Sigmoid colon (tissue), 7 donors: ENCODE measurements at regions of chr21 and their contacts with region 1.

Region 1: DNA sequence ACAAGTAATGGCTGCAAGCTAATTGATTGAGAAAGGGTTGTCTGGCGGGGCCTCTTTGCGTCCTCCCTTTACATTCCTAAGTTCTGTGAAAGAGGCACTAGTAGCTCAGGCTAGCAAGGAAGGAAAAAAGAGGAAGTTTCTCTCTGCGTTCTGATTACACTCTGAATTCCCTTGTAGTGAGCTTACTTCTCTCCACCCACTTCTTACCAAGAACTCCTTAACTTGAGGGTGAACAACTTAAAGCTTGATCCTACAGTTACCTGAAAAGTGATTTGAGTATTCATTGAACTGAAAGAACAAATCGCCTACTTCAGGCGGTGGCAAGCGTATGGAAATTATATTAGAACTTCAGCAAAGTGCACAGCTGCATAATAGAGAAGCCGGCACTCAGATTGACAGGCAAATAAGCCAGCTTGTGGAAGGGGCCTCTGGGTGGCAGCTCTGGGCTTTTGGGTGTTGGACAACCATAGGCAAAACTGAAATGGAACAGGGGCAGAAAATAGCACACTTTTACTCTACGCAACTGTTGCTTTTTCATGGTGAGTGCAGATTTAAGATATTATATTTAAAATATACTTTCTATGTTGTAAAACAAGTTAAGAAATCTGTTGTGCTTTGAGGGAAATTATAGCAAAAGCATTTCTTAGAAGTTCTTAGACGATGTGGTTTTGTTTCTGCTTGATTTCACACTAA is 464.5 kb downstream of the USP25 start:
- DNase-seq: peak; percentile 80
- H3K4me3 ChIP-seq: peak overlapping the region; percentile 15 to 45 (median 30)
- H3K27ac ChIP-seq: peak overlapping the region; percentile 64 to 70 (median 66)
- H3K4me1 ChIP-seq: no peaks in the 10 kb centered on the region
- H3K27me3 ChIP-seq: no peaks in the 10 kb centered on the region
- CTCF ChIP-seq: no peak
- EP300 ChIP-seq: no peak
- POLR2A ChIP-seq: no peak

Region 2: GRCh38 chr21:16308269-16308668 is 114.0 kb after region 1 on chr21:
- intact Hi-C with region 1: loop called (anchors 10 kb)
- DNase-seq: no peak
- H3K4me3 ChIP-seq: peak overlapping the region in 3 of 4 donors; percentile 0 to 32 (median 28)
- H3K27ac ChIP-seq: peak overlapping the region; percentile 12 to 60 (median 50)
- H3K4me1 ChIP-seq: peaks cover 0 to 3% (median 0%) of the 10 kb centered on the region in 4 donors
- H3K27me3 ChIP-seq: no peaks in the 10 kb centered on the region
- CTCF ChIP-seq: no peak
- EP300 ChIP-seq: no peak
- POLR2A ChIP-seq: no peak

Region 3: DNA sequence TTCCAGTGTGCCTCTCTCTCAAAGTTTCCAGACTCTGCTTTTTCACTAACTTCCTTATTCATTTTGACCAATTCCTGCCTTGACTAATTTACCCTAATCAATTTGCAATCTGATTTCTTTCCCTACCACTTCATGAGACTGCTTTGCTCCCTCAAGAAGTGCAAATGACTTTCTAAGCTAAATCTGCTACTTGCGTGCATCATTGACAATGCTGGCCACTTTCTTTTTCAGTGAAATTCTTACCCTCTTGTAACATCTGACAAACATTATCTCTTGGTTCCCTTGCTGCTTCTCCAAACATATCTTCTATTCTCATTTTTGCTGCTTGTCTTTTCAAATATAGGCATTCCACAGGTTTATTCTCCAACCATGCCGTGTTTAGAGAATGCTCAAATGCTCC is 195.4 kb after region 1 on chr21:
- intact Hi-C with region 1: no loop called
- DNase-seq: no peak
- H3K4me3 ChIP-seq: no peak overlapping the region
- H3K27ac ChIP-seq: no peak overlapping the region
- H3K4me1 ChIP-seq: no peaks in the 10 kb centered on the region
- H3K27me3 ChIP-seq: no peaks in the 10 kb centered on the region
- CTCF ChIP-seq: no peak
- EP300 ChIP-seq: no peak
- POLR2A ChIP-seq: no peak